ENCODE measurements at regions of chr16 and their contacts with region 1.

Region 1: GRCh38 chr16:1474796-1475551 is at the start of gene CLCN7:
- DNase-seq: peak; percentile 95
- total RNA-seq, gene CLCN7: 39.8 TPM

Region 2: DNA sequence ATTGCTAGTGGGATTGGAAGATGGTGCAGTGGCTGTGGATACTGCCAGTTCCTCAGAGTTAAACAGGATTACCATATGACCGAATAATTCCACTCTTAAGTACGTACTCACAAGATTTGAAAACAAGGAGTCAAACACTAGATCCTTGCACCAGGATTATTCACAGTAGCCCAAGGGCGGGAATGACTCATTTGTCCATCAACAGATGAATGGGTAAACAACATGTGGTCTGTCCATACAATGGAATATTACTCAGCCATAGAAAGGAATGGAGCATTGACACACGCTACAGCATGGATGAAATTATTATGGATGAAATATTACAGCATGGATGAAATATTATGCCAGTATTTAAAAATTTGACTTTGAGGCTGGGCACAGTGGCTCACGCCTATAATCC is 221.9 kb after region 1 on chr16:
- intact Hi-C with region 1: no loop called
- DNase-seq: no peak

Region 3: DNA sequence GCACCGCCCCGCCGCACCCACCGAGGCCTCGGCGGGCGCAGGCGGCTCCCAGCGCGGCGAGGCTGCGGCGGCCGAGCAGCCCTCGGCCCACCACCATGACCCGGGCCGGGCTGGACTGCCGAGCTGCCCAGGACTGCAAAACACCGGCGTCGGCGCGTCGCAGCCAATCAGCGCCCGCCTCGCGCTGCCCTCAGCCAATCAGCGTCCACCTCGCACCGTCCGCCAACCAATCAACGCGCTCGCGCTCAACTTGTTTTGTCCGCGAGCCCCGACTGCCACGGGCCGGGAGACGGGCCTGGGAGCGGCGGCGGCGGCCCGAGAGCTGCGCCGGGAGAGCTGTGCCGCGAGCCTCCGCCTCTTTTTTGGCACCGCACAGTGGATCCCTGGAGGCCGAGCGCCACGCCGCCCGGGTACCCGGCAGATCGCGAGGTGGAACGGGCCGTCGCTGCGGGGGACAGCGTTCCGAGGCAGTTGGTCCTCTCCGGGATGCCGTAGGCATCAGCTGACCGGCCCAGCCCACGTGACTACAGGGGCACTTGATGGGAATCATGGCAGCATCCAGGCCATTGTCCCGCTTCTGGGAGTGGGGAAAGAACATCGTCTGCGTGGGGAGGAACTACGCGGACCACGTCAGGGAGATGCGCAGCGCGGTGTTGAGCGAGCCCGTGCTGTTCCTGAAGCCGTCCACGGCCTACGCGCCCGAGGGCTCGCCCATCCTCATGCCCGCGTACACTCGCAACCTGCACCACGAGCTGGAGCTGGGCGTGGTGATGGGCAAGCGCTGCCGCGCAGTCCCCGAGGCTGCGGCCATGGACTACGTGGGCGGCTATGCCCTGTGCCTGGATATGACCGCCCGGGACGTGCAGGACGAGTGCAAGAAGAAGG is 352.0 kb after region 1 on chr16 and contains the starts of genes FAHD1 and HAGH:
- intact Hi-C with region 1: loop called (anchors 5 kb)
- DNase-seq: peak; percentile 97
- total RNA-seq, gene FAHD1: 20.5 TPM
- total RNA-seq, gene HAGH: 166 TPM

Measured in cardiac septum (tissue), 1 donor.